ENCODE measurements at regions of chr9 and their contacts with region 1.

Region 1: DNA sequence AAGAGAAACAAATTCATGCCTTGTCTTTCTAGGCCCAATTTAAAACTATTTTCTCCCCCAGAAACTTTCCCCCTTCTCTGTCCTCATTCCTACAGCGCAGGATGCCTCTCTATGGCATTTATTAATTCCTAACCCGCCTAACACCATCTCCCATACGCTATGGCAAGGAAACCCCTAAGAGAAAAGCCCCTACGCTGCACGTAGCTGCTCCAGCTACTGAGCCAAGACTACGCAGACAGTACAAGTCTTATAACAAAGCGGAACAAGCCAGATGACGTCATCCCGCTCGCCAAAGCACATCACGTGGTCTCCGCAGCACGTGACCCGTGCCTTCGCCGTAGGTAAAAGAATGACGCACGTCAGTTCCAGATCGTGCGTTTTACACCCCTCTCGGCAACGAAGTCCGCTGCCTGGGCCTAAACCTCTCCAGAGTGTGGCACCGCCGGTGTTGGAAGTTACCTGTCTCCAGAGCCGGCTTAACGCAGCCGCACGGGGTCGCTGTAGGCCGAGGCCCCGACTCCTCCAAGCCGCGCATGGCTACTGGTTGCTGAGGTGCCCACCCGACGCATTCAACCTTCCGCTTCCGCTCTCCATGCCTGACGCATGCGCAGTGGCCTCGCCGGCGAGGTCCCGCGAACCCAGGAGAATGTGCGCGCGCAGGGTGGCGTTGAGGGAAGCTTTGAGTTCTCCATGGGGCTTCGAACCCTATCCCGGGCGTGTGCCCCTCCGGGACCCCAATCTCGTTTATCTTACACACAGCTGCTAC is at the start of gene TRMO:
- DNase-seq: peak; percentile 97 to 99 (median 98)
- H3K4me3 ChIP-seq: peak within 1 kb of the TSS; percentile 72
- H3K27ac ChIP-seq: peak within 1 kb of the TSS; percentile 95 to 97
- H3K4me1 ChIP-seq: no peaks in the 10 kb centered on the region
- H3K27me3 ChIP-seq: no peaks in the 10 kb centered on the region
- CTCF ChIP-seq: peak; percentile 33 to 85 (median 59)
- EP300 ChIP-seq: peak; percentile 73
- POLR2A ChIP-seq: peak; percentile 89
- total RNA-seq, gene TRMO: 11.5 to 19.4 (median 15.3) TPM

Region 2: DNA sequence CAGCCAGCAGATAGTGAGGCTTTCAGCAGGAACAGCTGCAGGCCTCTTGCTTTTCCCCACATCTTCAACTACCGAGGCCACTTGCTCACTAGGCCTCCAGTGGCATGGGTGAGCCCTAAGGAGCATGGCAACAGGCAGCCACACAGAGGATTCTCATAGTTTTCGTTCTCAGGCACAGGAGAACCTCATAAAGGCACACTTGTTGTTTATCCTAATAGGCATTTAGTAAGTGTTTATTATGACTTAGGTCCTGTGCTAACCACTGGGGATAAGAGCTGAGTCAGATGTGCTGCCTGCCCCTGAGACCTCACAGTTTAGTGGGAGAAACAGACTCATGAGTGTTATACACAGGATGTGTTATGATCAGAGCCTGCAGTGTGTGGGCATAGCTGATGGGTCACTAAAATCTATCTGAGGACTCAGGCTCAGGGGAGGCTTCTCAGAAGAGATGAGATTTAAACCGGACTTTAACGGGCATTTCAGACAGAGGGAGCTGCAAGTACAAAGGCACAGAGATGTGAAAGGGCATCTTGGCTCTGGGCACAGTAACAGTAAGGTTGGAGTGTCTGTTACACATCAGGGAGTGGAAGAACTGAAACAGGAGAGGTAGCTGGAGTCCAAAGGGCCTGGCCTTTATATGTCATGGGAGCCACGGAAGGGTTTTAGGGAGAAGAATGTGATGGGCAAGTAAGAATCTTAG is 36.8 kb after region 1 on chr9:
- intact Hi-C with region 1: no loop called
- DNase-seq: no peak
- H3K4me3 ChIP-seq: no peak overlapping the region
- H3K27ac ChIP-seq: no peak overlapping the region
- H3K4me1 ChIP-seq: no peaks in the 10 kb centered on the region
- H3K27me3 ChIP-seq: no peaks in the 10 kb centered on the region
- CTCF ChIP-seq: no peak
- EP300 ChIP-seq: no peak
- POLR2A ChIP-seq: no peak

Region 3: GRCh38 chr9:97982683-97983588 is 60.8 kb after region 1 on chr9 and contains the start of gene ANP32B:
- intact Hi-C with region 1: loop called (anchors 2 to 10 kb)
- DNase-seq: peak; percentile 83 to 93 (median 89)
- H3K4me3 ChIP-seq: peak within 1 kb of the TSS; percentile 92
- H3K27ac ChIP-seq: peak within 1 kb of the TSS; percentile 93 to 98
- H3K4me1 ChIP-seq: peaks cover 4% of the 10 kb centered on the region
- H3K27me3 ChIP-seq: no peaks in the 10 kb centered on the region
- CTCF ChIP-seq: peak; percentile 89 to 97 (median 95)
- EP300 ChIP-seq: no peak
- POLR2A ChIP-seq: peak; percentile 17
- total RNA-seq, gene ANP32B: 41.4 to 167 (median 137) TPM

Region 4: DNA sequence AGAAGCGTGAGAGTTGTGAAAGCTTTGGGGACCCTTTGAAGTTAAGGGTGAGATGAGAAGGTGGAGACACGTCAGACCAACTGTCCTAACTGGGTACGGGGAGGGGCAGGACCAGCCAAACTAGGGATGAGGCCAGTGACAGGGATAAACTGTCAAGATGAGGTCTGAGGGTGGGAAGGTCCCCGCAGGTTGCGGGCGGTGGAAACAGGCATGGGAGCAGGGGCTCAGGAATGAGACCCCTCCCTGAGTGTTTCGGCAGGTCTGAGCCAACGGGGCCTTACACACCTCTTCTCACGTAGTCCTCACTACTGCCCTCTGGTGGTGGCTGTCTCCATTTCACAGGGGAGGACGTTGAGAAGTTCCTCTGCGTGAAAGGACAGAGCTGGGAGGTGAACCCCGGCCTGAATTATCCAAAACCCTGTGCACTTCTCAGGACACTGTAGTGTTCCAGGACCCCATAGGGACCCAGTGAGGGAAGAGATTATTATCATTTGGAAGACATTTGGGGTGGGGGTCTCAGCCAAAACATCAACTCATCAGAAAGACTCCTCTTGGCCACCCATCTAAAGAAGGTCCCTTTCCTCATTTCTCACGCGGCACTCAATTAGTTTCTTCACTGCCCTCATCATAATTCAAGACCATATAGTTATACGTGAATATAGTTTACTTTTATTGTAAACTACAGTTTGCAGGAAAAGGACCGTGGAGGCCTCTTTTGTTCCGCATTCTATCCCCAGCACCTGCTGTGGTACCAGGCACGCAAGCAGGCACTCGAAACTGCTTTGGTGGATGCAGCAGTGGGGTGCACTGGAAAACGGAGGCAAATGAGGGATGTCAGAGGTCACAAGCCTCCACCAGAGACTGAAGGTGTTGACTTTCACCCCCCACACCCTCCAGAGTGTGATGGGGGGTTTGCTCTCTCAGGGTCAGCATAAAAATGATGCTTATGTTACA is 112.7 kb after region 1 on chr9:
- intact Hi-C with region 1: loop called in 3 of 4 experiments (anchors 5 to 10 kb)
- DNase-seq: peak; percentile 77 to 90 (median 81)
- H3K4me3 ChIP-seq: no peak overlapping the region
- H3K27ac ChIP-seq: no peak overlapping the region
- H3K4me1 ChIP-seq: no peaks in the 10 kb centered on the region
- H3K27me3 ChIP-seq: no peaks in the 10 kb centered on the region
- CTCF ChIP-seq: peak; percentile 60 to 69 (median 64)
- EP300 ChIP-seq: no peak
- POLR2A ChIP-seq: no peak

Region 5: GRCh38 chr9:98255578-98256296 is 333.6 kb after region 1 on chr9 and contains the start of gene TBC1D2:
- intact Hi-C with region 1: loop called in 3 of 4 experiments (anchors 5 to 10 kb)
- DNase-seq: peak; percentile 92 to 97 (median 96)
- H3K4me3 ChIP-seq: peak within 1 kb of the TSS; percentile 62
- H3K27ac ChIP-seq: peak within 1 kb of the TSS; percentile 90 to 94
- H3K4me1 ChIP-seq: peaks cover 8% of the 10 kb centered on the region
- H3K27me3 ChIP-seq: no peaks in the 10 kb centered on the region
- CTCF ChIP-seq: peak in 2 of 3 donors; percentile 33 to 36
- EP300 ChIP-seq: no peak
- POLR2A ChIP-seq: no peak
- total RNA-seq, gene TBC1D2: 3.9 to 11.3 (median 4.7) TPM

Region 6: DNA sequence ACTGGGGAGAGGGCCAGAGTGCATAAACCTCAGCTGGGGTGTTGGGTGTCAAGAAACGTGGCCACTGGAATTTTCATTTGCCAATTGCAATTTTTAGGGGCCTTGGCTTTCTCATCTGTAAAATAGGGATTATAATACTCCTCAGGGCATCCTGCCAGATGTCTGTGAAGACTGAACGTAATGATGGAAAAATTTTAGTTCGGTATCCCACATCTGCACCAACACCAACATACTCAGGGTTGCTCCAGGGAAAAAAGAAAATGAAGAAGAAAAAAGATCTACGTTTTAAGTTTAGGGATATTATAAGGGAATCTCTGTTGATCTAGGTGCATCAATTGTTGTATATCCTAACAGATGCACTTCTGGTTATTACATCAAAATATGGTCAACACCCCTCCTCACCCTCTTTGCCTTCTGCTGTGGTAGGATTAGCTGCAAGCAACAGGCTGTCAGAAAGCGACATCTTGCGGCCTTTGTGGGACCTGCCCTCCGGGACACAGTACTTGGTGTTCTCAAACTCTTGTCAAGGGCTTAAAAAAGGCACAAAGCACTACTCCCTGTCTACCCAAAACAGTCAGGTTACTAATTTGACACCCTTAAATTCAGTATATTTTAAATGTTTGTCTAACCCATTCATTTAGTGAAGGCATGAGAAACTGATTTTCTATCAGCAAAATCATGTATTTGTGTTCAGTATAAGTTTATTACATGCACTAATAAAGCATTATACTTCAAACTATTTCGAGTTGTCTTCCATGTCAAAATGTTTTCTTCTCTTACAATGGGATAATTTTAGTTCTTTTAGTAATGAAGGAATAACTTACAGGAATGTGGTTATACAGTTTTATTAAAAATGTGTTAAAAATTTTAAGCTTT is 341.6 kb after region 1 on chr9:
- intact Hi-C with region 1: loop called in 3 of 4 experiments (anchors 5 to 10 kb)
- DNase-seq: peak; percentile 64 to 81 (median 77)
- H3K4me3 ChIP-seq: no peak overlapping the region
- H3K27ac ChIP-seq: no peak overlapping the region
- H3K4me1 ChIP-seq: no peaks in the 10 kb centered on the region
- H3K27me3 ChIP-seq: no peaks in the 10 kb centered on the region
- CTCF ChIP-seq: peak; percentile 38 to 69 (median 50)
- EP300 ChIP-seq: no peak
- POLR2A ChIP-seq: no peak

Measured in ovary (tissue), 10 donors.